ENCODE measurements at regions of chr6 and their contacts with region 1.

Region 1: GRCh38 chr6:3456755-3457466 is at the start of gene SLC22A23:
- DNase-seq: peak; percentile 47 to 83
- H3K4me3 ChIP-seq: peak within 1 kb of the TSS; percentile 84
- H3K27ac ChIP-seq: no peak within 1 kb of the TSS
- H3K4me1 ChIP-seq: peaks cover 14% of the 10 kb centered on the region
- H3K27me3 ChIP-seq: no peaks in the 10 kb centered on the region
- CTCF ChIP-seq: peak; percentile 58; the same call in 1 of the 2 replicates
- total RNA-seq, gene SLC22A23: 13.5 and 16.3 TPM in 2 replicates

Region 2: DNA sequence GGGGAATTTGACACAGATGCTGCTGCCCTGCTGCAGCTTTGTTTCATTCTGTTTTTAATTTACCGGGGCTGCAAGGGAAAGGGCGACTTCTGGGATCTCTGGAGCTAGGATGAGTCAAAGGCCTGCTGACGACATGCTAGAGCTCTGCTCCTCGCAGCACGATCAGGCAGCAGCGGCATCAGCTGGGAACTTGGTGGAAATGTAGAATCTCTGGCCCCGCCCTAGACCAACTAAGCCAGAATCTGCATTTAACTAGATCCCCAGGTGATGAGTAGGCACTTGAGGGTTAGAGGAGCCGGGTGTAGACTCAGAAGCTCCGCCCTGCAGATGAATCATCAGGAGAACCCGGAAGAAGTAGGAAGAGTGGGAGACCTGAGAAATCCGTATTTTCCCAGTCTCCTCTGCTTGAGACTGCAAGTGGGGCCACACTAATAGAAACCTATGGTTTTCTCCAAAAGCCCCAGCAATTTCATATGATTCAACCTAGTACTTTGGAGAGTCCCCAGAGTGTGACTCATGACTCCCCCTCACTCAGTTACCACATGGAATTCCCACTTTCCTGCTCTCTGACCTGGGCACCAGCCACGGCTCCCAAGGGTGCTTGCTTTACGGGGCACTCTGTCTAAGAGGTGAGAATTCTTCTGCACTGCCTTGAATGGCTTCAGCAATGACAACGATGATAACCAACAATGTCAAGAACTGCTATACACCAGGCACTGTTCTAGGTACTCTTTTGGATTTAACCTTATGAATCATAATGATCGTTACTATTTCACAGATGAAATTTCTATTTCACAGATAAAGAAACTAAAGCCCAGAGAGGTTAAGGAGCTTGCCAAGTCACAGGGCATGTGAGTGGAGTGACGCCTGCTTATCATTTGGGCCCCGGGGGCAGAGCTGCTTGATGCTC is 247.5 kb before region 1 on chr6:
- CTCF ChIA-PET with region 1: no interaction called
- POLR2A ChIA-PET with region 1: no interaction called
- intact Hi-C with region 1: no loop called
- DNase-seq: peak; percentile 87 to 98
- H3K4me3 ChIP-seq: peak overlapping the region; percentile 19; the same call in 1 of the 2 replicates
- H3K27ac ChIP-seq: peak overlapping the region; percentile 83
- H3K4me1 ChIP-seq: peaks cover 37% of the 10 kb centered on the region
- H3K27me3 ChIP-seq: no peaks in the 10 kb centered on the region
- CTCF ChIP-seq: no peak

Region 3: DNA sequence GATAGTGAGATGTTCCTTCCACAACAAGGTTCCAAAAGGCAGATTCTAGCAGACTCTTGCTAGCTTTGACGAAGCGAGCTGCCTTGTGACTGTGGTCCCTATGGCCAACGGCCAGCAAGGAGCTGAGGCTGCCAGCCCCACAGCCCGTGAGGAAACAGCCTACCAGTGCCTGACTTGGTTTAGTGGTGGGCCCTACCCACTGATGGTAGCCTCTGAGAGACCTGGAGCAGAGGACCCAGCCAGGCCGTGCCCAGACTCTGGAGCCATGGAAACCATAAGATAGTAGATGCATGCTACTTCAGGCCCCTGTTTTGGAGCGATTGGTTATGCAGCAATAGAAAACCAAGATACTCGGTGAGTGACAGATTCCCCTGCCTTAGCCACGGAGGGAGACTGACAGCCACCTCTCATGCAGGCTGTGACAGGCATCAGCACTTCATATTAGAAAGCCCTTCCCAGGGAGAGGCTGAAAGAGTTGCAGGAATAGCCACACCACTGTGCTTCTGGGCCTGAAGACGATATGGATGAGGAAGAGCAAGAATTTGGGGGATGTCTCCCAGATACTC is 179.0 kb before region 1 on chr6:
- CTCF ChIA-PET with region 1: no interaction called
- POLR2A ChIA-PET with region 1: no interaction called
- intact Hi-C with region 1: loop called (anchors 1 kb)
- DNase-seq: no peak
- H3K4me3 ChIP-seq: no peak overlapping the region
- H3K27ac ChIP-seq: no peak overlapping the region
- H3K4me1 ChIP-seq: no peaks in the 10 kb centered on the region
- H3K27me3 ChIP-seq: no peaks in the 10 kb centered on the region
- CTCF ChIP-seq: no peak

Region 4: GRCh38 chr6:3419624-3420272 is 37.2 kb before region 1 on chr6:
- CTCF ChIA-PET with region 1: interaction called, 3 read pairs
- POLR2A ChIA-PET with region 1: no interaction called
- intact Hi-C with region 1: loop called (anchors 2 kb)
- DNase-seq: peak in 1 of 2 experiments; percentile 78
- H3K4me3 ChIP-seq: no peak overlapping the region
- H3K27ac ChIP-seq: peak overlapping the region; percentile 76
- H3K4me1 ChIP-seq: peaks cover 59% of the 10 kb centered on the region
- H3K27me3 ChIP-seq: no peaks in the 10 kb centered on the region
- CTCF ChIP-seq: no peak

Region 5: DNA sequence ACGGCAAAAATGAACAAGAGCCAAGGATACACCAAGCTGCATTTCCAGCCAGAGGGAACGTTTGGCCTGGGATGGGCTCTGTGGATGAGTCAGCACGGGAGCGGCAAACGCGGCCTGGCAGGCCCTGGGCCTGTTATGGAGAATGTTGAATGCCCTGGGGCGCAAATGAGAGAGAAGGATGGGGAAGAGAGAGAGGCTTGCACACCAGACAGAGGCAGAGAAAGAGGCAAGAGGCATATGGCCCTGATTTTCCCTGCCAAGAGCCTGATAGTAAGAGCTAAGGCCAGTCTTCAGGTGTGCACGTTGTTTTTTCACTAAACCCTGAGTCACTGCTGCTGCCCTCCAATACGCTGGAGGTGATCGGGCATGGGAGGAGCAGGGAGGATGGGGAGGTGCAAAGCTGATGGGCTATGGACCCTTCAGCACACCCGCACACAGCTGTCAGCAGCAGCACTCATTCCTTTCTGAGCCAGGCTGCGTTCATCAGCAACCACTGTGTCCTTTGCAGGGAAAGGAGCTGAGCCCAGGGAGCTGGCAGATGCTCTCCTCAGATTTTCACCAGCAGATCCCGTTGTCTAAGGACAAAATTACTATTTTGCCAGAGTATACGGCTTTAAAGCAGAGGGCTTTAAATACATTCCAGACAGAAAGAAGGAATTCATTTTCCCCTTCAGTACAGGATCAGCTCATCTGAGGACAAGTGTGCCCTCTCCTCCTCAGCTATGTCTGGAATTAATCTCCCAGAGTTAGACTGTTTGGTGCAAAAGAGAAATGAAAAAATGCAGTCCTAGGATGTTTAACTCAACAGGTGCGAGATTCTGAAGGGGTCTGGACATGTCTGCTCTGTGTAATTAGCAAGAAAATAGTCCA is 61.7 kb after region 1 on chr6:
- CTCF ChIA-PET with region 1: interaction called, 9 read pairs
- POLR2A ChIA-PET with region 1: interaction called, 3 read pairs
- intact Hi-C with region 1: loop called (anchors 5 kb)
- DNase-seq: peak; percentile 85 to 90
- H3K4me3 ChIP-seq: peak overlapping the region; percentile 31; the same call in 1 of the 2 replicates
- H3K27ac ChIP-seq: peak overlapping the region; percentile 71
- H3K4me1 ChIP-seq: peaks cover 52% of the 10 kb centered on the region
- H3K27me3 ChIP-seq: no peaks in the 10 kb centered on the region
- CTCF ChIP-seq: no peak

Region 6: GRCh38 chr6:3612341-3613041 is 155.6 kb after region 1 on chr6:
- CTCF ChIA-PET with region 1: no interaction called
- POLR2A ChIA-PET with region 1: no interaction called
- intact Hi-C with region 1: loop called (anchors 5 kb)
- DNase-seq: peak; percentile 48 to 94
- H3K4me3 ChIP-seq: no peak overlapping the region
- H3K27ac ChIP-seq: peak overlapping the region; percentile 78
- H3K4me1 ChIP-seq: peaks cover 44% of the 10 kb centered on the region
- H3K27me3 ChIP-seq: no peaks in the 10 kb centered on the region
- CTCF ChIP-seq: no peak

Region 7: GRCh38 chr6:3732345-3733141 is 275.6 kb after region 1 on chr6:
- CTCF ChIA-PET with region 1: no interaction called
- POLR2A ChIA-PET with region 1: no interaction called
- intact Hi-C with region 1: loop called (anchors 1 kb)
- DNase-seq: peak; percentile 55 to 72
- H3K4me3 ChIP-seq: no peak overlapping the region
- H3K27ac ChIP-seq: no peak overlapping the region
- H3K4me1 ChIP-seq: no peaks in the 10 kb centered on the region
- H3K27me3 ChIP-seq: no peaks in the 10 kb centered on the region
- CTCF ChIP-seq: peak; percentile 86

Region 8: DNA sequence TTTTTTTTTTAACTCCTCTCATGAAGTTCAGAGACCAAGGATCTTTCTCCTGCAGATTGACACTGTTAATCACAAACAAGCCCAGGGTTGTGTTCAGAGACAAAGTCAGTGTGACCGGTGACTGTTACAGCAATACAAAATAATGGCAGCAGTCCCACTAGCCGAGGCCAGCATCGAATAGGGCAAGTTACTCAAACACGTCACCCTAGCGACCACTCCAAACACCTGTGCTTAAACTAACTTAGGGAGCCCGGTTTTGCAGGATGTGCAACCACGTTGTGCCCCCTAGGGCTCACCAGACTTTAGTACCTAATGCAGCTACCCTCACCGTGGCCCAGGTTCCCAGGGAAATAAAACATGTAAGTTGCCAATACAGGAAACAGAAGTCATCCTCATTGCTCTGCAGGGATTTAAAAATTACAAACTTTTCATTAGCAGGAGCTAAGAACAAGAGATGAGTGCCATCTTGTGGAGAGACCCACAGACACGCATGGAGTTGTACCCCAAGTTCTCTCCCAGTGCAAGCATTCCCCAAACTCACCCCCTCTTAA is 430.3 kb after region 1 on chr6:
- CTCF ChIA-PET with region 1: no interaction called
- POLR2A ChIA-PET with region 1: no interaction called
- intact Hi-C with region 1: no loop called
- DNase-seq: peak; percentile 28 to 69
- H3K4me3 ChIP-seq: no peak overlapping the region
- H3K27ac ChIP-seq: no peak overlapping the region
- H3K4me1 ChIP-seq: peaks cover 40% of the 10 kb centered on the region
- H3K27me3 ChIP-seq: no peaks in the 10 kb centered on the region
- CTCF ChIP-seq: 0 out of 2 replicates have a peak, but pooled peaks have one; percentile 37